ENCODE measurements at regions of chr19 and their contacts with region 1.

Region 1: GRCh38 chr19:12610540-12611360 is at the starts of genes ZNF490 and ZNF791:
- DNase-seq: peak; percentile 89
- ATAC-seq: peak; percentile 80
- H3K4me3 Mint-ChIP-seq: peak within 1 kb of the TSS; percentile 100
- H3K27ac Mint-ChIP-seq: peak within 1 kb of the TSS; percentile 100
- H3K4me1 Mint-ChIP-seq: peaks cover 66% of the 10 kb centered on the region
- H3K27me3 Mint-ChIP-seq: no peaks in the 10 kb centered on the region
- CTCF ChIP-seq: no peak
- total RNA-seq, gene ZNF490: 15.6 TPM in 2 replicates
- total RNA-seq, gene ZNF791: 37.5 and 46.1 TPM in 2 replicates

Region 2: DNA sequence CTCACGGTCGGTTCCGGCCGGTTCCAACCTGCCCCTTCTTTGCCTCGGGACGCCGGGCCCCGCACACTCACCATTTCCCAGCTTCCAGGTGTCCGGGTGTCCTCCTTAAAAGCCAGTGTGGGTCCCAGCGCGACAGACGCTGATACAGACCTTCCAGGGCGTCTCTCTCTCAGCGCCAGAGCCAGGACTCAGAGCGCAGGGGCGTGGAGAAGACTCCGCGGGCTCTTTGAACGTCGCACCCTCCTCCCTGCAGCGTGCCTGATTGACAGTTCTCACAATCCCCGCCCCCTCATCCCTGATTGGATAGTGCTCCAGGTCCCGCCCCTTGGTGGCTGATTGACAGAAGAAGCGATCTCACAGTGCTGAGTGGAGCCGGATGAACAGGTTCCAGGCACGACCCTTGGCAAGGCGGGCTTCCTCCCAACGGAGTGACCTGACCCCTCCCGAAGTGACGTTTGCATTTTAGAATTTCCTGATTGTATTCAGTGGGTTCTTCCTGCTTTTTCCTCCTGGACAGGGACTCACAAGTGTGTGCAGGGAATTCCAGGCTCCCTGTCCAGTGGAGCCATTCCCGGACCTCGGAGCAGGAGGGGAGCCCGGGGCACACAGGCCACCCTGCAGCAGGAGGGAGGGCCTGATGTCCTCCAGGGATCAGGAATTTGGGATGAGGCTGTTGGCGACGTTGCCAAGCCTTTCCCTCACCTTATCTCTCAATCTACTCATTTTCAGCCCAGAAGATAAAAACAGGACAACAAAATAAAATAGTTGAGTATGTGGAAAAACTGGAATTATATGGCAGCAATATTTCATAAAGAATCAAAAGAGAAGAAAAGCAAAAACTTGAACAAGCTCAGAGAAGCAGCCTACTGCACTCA is 871.8 kb before region 1 on chr19 and contains the start of gene ZNF823:
- CTCF ChIA-PET with region 1: no interaction called
- POLR2A ChIA-PET with region 1: no interaction called
- intact Hi-C with region 1: loop called (anchors 5 kb)
- DNase-seq: peak; percentile 87
- ATAC-seq: peak; percentile 98
- H3K4me3 Mint-ChIP-seq: peak within 1 kb of the TSS; percentile 99
- H3K27ac Mint-ChIP-seq: peak within 1 kb of the TSS; percentile 91
- H3K4me1 Mint-ChIP-seq: peaks cover 25% of the 10 kb centered on the region
- H3K27me3 Mint-ChIP-seq: peaks cover 1% of the 10 kb centered on the region
- CTCF ChIP-seq: no peak
- total RNA-seq, gene ZNF823: 2.6 and 3.0 TPM in 2 replicates

Region 3: DNA sequence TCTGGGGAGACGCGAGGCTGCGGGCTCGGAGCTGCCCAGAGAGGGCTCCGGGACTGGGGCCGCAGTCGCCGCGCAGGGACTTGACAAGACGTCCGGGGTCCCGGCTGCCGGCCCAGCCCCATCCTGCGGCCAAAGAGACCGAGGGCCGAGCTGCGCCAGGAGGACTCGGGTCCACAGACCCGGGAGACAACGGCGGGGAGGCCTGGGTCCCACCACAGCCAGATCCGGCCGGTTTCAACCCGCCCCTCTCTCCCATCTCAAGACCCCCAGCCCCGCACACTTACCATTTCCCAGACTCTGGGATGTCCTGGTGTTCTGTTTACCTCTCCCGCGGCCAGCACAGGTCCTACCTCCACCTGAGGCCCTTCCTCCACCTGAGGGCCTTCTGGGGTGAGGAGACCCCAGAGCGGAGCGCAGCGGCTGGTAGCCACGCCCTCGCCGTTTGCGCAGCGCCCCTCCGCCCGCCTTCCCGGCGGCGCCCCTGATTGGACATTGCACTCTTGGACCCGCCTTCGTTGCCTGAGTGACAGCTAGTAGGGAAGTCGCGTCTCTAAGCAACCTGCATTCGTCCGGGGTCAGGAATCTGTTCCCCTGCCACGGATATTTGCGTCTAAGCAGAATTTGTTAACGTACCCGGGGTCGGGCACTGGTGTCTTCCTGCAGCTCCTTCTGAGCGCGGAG is 126.2 kb before region 1 on chr19 and contains the start of gene ZNF709:
- CTCF ChIA-PET with region 1: no interaction called
- POLR2A ChIA-PET with region 1: interaction called, 20 read pairs
- intact Hi-C with region 1: no loop called
- DNase-seq: peak; percentile 90
- ATAC-seq: peak; percentile 98
- H3K4me3 Mint-ChIP-seq: peak within 1 kb of the TSS; percentile 96
- H3K27ac Mint-ChIP-seq: peak within 1 kb of the TSS; percentile 88
- H3K4me1 Mint-ChIP-seq: peaks cover 35% of the 10 kb centered on the region
- H3K27me3 Mint-ChIP-seq: no peaks in the 10 kb centered on the region
- CTCF ChIP-seq: no peak
- total RNA-seq, gene ZNF709: 4.8 and 6.4 TPM in 2 replicates

Region 4: DNA sequence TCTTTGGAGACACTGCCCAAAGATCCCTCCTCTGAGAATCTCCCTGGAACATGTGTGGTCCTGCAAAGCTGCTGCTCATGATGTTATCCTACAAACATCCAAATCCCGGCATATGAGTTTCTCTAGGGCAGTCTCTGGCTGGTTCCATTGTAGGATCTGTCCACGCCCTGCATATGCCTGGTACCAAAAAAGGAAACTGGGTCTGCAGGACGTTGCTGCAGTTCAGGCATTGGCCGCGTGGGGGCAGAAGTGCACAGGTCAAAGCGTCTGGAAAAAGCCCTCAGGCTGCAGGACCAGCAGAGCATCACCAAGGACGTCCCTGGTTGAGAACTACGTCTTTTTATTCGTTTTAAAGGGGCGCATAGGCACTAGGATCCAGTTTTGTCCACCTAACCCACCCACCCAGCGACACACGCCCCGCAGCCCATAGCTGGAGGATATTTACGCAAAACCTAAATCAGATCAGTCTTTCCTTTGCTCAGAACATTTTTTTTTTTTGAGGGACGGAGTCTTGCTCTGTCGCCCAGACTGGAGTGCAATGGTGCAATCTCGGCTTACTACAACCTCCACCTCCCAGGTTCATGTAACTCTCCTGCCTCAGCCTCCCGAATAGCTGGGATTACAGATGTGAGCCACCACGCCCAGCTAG is 46.6 kb before region 1 on chr19:
- CTCF ChIA-PET with region 1: interaction called, 3 read pairs
- POLR2A ChIA-PET with region 1: no interaction called
- intact Hi-C with region 1: loop called (anchors 1 kb)
- DNase-seq: peak; percentile 91
- ATAC-seq: peak; percentile 100
- H3K4me3 Mint-ChIP-seq: no peak overlapping the region
- H3K27ac Mint-ChIP-seq: no peak overlapping the region
- H3K4me1 Mint-ChIP-seq: peaks cover 6% of the 10 kb centered on the region
- H3K27me3 Mint-ChIP-seq: no peaks in the 10 kb centered on the region
- CTCF ChIP-seq: no peak

Region 5: GRCh38 chr19:12628040-12629022 is 17.6 kb after region 1 on chr19:
- CTCF ChIA-PET with region 1: no interaction called
- POLR2A ChIA-PET with region 1: interaction called, 6 read pairs
- intact Hi-C with region 1: loop called (anchors 1 kb)
- DNase-seq: no peak
- ATAC-seq: no peak
- H3K4me3 Mint-ChIP-seq: no peak overlapping the region
- H3K27ac Mint-ChIP-seq: no peak overlapping the region
- H3K4me1 Mint-ChIP-seq: peaks cover 4% of the 10 kb centered on the region
- H3K27me3 Mint-ChIP-seq: no peaks in the 10 kb centered on the region
- CTCF ChIP-seq: no peak

Region 6: DNA sequence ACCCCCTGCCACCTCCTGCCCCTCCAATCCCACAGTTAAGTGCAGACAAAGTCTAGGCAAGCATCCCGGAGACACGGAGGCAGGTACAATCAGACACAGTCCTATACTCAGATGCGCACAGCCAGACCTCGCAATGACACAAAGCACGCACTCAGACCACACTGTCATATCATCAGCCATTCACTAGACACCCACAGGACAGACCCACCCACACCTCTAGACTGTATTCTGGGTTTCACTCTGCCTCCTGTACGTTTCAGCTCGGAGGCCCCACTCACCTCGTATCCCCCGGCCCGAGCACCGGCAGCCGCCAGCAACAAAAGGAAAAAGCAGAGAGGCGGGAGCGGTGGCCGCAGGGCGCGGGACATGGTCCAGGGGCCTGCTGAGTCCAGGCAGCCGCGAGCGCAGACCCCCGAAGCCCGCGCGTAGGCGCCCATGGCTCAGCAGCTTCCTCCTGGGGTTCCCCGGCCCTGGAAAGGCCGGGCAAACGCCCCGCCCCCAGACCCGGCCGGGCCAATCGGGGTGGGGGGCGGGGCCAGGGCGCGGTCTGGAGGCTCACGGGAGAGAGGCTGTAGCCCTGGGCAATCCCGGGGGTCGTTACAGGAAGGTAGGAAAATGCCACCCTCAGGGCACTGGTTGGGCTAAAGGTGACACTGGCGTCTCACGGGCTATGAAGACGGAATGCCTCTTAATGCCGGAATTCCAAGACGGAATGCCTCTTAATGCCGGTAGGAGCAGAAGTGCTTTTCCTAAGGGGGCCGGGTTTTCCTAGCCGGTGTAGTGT is 55.7 kb after region 1 on chr19 and contains the starts of genes MAN2B1 and WDR83:
- CTCF ChIA-PET with region 1: interaction called, 4 read pairs
- POLR2A ChIA-PET with region 1: interaction called, 74 read pairs
- intact Hi-C with region 1: loop called (anchors 1 kb)
- DNase-seq: peak; percentile 83
- ATAC-seq: peak; percentile 70
- H3K4me3 Mint-ChIP-seq: peak within 1 kb of the TSS; percentile 97
- H3K27ac Mint-ChIP-seq: peak within 1 kb of the TSS; percentile 93
- H3K4me1 Mint-ChIP-seq: peaks cover 69% of the 10 kb centered on the region
- H3K27me3 Mint-ChIP-seq: no peaks in the 10 kb centered on the region
- CTCF ChIP-seq: no peak
- total RNA-seq, gene MAN2B1: 251 and 291 TPM in 2 replicates
- total RNA-seq, gene WDR83: 17.7 and 20.8 TPM in 2 replicates

Region 7: DNA sequence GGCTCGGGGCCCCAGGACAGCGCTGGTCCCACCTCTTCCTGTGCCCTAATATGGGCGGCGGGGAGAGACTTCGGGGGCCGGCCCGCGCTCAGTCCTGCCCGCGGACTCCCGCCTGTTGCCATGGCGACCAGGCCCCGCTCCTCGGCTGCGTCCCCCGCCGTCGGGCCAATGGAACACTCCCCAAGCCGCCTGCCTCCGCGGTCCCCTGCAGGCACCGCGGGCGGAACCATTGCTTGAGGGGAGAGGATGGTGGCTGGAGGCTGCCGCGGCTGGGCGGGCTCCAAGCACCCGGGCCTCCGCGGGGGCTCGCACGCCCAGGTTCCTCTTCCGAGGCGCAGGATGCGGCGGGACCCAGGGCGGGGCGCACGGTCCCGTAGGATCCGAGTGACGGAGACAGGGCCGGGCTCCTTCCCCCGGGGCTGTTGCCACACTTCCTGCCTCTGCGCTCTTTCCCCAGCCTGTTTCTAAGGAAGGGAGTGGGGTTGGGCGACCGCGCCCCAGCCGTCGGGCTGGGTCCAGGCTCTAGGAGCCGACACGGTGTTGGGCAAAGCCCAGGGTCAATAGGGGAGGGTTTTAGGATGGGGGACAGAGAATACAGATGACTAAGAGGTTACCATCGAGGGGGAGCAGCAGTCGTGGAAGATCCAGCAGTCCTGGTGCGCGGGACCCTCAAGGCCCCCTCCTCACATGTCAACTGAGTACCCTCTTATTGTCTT is 179.3 kb after region 1 on chr19:
- CTCF ChIA-PET with region 1: no interaction called
- POLR2A ChIA-PET with region 1: interaction called, 17 read pairs
- intact Hi-C with region 1: loop called (anchors 5 kb)
- DNase-seq: peak; percentile 95
- ATAC-seq: peak; percentile 43
- H3K4me3 Mint-ChIP-seq: peak overlapping the region; percentile 96
- H3K27ac Mint-ChIP-seq: peak overlapping the region; percentile 97
- H3K4me1 Mint-ChIP-seq: peaks cover 52% of the 10 kb centered on the region
- H3K27me3 Mint-ChIP-seq: no peaks in the 10 kb centered on the region
- CTCF ChIP-seq: no peak